Prostate gland (tissue), 2 donors: ENCODE measurements at regions of chr14 and their contacts with region 1.

Region 1: DNA sequence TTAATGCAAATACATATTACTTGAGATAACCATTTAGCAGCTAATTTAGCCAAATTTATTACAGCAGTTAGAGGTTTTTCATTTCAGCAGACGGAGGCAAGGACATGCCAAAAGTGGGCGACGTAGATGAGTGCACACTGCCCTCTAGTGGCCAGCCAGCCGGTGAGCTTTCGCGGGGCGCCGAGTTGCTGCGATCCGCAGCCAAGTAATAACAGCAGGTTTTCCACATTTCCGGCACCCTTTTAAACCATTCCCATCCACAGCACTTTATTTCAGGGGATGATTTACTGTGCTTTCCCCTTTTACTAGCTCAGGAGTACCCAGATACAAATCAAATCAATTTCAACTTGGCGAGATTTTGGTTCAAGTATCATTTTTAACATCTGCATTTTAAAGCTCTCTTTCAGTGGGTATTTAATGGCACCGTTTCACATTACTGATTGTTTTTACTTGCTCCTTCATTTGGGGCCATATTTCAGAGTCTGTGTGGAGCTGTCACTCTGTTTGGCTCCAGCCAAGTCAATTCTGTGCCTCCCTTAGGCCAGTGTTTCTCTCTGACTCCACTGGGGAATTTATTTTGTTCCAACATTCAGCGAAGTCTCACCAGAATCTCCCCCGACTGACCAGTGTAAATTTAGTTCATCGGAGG is 158.0 kb downstream of the EGLN3 start:
- DNase-seq: peak; percentile 84
- H3K4me3 ChIP-seq: peak overlapping the region in 1 of 2 donors; percentile 0
- H3K27ac ChIP-seq: no peak overlapping the region
- H3K4me1 ChIP-seq: peaks cover 4% of the 10 kb centered on the region
- H3K27me3 ChIP-seq: no peaks in the 10 kb centered on the region
- CTCF ChIP-seq: peak; percentile 83 to 95 (median 88)
- POLR2A ChIP-seq: no peak

Region 2: GRCh38 chr14:32710731-32711680 is 1081.8 kb before region 1 on chr14:
- intact Hi-C with region 1: loop called (anchors 5 kb)
- DNase-seq: peak; percentile 27
- H3K4me3 ChIP-seq: no peak overlapping the region
- H3K27ac ChIP-seq: no peak overlapping the region
- H3K4me1 ChIP-seq: no peaks in the 10 kb centered on the region
- H3K27me3 ChIP-seq: no peaks in the 10 kb centered on the region
- CTCF ChIP-seq: peak in 3 of 4 experiments; percentile 57 to 63 (median 57)
- POLR2A ChIP-seq: no peak

Region 3: DNA sequence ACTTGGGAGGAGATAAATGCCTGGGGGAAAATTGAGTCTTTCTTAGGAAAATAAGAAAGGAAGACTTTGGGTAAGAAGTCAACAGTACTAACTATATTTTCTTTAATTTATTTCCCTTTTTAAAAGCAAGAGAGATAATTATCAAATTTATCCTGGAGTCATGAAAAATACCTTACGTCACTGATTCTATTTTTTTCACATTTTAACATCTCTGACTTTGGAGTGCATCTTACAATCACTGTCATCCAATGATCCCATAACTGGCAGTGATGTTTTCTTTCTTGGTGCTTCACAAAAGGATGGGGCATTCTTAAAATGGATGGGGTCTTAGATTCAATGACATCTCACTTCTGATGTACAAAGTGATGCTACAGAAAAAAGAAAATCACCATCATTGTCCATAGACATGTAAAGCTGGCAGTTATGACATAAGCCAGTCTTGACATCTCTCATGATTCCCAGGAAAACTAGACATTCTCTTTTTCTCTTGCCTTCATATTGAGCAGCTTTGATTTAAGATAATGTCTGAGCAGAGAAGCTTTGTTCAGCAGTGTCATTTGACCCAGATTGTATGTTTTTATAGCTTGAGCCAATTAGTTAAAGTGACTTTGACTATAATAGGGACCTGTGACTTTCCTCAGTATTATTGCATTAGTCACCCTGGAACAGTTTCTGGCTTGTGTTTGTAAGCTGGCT is 78.2 kb before region 1 on chr14:
- intact Hi-C with region 1: no loop called
- DNase-seq: no peak
- H3K4me3 ChIP-seq: no peak overlapping the region
- H3K27ac ChIP-seq: no peak overlapping the region
- H3K4me1 ChIP-seq: no peaks in the 10 kb centered on the region
- H3K27me3 ChIP-seq: no peaks in the 10 kb centered on the region
- CTCF ChIP-seq: no peak
- POLR2A ChIP-seq: no peak